Posterior vena cava (tissue), 2 donors: ENCODE measurements at regions of chr17 and their contacts with region 1.

Region 1: GRCh38 chr17:49575579-49576087 is at the start of gene NXPH3:
- DNase-seq: peak; percentile 90
- total RNA-seq, gene NXPH3: 34.8 to 57.1 TPM

Region 2: GRCh38 chr17:49530118-49530517 is 45.5 kb before region 1 on chr17:
- intact Hi-C with region 1: no loop called
- DNase-seq: no peak

Region 3: DNA sequence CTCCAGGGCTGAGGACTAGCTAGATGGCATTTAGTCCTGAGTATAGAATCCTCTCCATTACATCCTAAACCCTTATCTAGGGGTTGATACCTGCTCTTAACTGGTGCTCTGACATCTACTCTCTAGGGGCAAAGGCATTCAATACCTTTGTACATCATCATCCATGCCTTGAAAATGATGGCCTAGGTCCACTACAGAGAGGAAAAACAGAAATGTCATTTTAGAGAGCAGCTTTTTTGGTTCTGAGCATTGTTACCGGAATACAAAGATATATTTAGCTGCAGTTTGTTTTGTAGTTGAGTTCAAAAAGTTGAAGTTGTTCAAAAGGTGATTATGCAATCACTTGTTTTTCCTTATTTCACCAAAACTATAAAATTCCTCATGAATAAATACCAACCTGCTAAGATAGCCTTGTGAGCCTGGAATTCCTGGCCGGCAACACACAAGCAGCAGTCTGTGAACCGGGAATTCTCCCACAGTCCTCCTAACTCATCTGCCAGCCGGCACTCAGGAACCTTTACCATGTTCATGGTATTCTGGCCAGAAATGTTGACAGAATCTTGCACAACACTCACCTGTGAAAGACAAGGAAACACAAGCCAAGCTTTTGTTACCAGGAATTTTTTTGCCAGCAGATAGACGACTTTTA is 35.4 kb after region 1 on chr17:
- intact Hi-C with region 1: loop called in 1 of 2 experiments (anchors 5 kb)
- DNase-seq: no peak

Region 4: GRCh38 chr17:49637050-49637449 is 61.4 kb after region 1 on chr17:
- intact Hi-C with region 1: loop called in 1 of 2 experiments (anchors 10 kb)
- DNase-seq: no peak

Region 5: DNA sequence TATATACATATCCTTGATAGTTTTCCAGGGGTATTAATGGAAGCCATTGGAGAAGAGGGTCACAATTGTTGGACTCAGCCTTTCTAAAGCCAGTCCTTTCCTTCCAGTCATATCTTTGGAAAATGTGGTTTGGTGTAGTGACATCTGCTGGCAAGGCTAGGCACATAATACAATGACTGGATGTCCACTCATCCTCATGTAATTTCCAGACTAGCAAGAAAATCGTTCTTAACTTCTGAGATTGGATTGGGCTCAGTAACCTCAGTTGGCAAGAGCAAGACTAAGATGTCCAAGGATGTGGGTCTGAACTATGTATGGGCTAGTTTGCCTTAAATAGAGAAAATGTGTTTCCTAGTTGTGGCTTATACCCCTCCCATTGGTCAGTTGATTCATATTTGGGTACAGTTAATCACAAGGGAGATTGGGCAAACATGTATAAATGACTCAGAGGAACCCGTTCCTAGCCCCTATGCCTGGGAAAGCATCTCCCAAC is 204.2 kb after region 1 on chr17:
- intact Hi-C with region 1: loop called in 1 of 2 experiments (anchors 5 kb)
- DNase-seq: no peak

Region 6: DNA sequence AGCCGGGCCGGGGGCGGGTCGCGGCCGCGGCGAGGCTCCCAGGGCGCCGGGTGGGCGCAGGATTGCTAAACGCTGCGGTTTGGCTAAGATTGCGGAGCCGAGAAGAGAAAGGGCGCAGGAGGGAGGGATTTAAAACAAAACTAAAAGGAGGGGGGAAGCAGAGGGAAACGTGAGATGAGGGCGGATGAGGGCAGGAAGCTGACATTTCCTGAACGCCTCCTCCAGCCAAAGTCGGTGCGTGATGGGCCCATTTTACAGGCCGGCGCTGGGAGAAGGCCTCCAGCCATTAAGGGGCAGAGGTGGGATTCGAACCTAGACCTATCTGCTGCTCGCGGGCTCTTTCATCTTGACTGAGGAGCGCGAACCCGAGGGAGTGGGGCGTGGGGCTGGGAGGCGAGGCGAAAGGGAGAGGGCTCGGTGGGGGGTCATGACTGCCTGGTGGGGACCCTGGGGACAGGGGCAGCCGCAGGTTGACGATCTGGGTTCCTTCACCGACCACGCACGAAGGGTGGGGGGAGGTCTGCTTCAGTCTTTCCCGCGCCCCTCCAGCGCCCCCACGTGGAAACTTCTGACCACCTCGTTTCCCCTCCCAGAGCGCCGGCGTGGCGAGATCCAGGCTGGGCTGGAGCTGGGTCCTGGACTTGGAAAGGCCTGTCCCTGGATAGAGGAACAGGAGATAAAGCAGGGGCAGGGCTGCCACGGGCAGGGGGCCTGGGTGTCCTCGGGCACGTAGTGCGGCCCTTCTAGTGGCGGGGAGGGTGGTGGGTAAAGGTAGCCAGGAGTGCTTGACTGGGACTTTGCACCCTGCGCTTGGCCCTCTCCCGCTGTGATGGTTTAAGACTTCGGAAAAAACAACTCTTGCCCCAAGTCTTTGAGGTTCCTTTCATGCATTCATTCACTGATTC is 276.0 kb after region 1 on chr17:
- intact Hi-C with region 1: loop called in 1 of 2 experiments (anchors 5 kb)
- DNase-seq: peak; percentile 95